Heart right ventricle (tissue), 16 donors: ENCODE measurements at regions of chr1 and their contacts with region 1.

Region 1: DNA sequence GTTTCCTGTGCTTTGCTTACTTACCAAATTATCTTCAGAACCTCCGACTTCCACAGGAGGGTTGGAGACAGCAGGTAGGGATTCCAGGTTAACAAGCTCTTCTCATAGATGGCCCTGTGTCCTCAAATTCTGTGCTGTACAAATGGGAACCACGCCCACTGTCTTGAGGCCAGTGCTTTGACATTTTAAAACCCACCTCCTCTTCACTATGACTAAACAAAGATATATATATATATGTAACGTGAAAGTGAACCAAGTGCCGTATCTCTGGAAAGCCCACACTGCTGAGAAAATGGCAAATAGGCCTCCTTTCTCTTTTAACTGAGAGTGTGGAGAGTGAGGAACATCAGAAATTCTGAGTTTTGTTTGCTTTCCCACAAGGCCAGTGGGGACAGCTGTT is 99.6 kb downstream of the ZBTB18 start:
- DNase-seq: no peak
- ATAC-seq: no peak
- H3K4me3 ChIP-seq: no peak overlapping the region
- H3K27ac ChIP-seq: no peak overlapping the region
- H3K4me1 ChIP-seq: no peaks in the 10 kb centered on the region
- H3K27me3 ChIP-seq: peaks cover 0 to 4% (median 0%) of the 10 kb centered on the region in 7 donors
- CTCF ChIP-seq: no peak

Region 2: GRCh38 chr1:243433737-243434370 is 716.8 kb before region 1 on chr1:
- intact Hi-C with region 1: loop called in 1 of 10 experiments (anchors 5 kb)
- DNase-seq: no peak
- ATAC-seq: no peak
- H3K4me3 ChIP-seq: no peak overlapping the region
- H3K27ac ChIP-seq: no peak overlapping the region
- H3K4me1 ChIP-seq: no peaks in the 10 kb centered on the region
- H3K27me3 ChIP-seq: no peaks in the 10 kb centered on the region
- CTCF ChIP-seq: no peak

Region 3: GRCh38 chr1:243917177-243917862 is 233.3 kb before region 1 on chr1:
- intact Hi-C with region 1: no loop called
- DNase-seq: peak; percentile 9 to 17
- ATAC-seq: peak; percentile 59 to 91 (median 84)
- H3K4me3 ChIP-seq: peak overlapping the region; percentile 22 to 67 (median 53)
- H3K27ac ChIP-seq: peak overlapping the region in 6 of 10 donors; percentile 5 to 39 (median 15)
- H3K4me1 ChIP-seq: peaks cover 0 to 16% (median 9%) of the 10 kb centered on the region in 9 donors
- H3K27me3 ChIP-seq: peaks cover 0 to 48% (median 30%) of the 10 kb centered on the region in 7 donors
- CTCF ChIP-seq: peak in 3 of 9 donors; percentile 5 to 34 (median 18)